A673 (cell line): ENCODE measurements at regions of chr19 and their contacts with region 1.

Region 1: DNA sequence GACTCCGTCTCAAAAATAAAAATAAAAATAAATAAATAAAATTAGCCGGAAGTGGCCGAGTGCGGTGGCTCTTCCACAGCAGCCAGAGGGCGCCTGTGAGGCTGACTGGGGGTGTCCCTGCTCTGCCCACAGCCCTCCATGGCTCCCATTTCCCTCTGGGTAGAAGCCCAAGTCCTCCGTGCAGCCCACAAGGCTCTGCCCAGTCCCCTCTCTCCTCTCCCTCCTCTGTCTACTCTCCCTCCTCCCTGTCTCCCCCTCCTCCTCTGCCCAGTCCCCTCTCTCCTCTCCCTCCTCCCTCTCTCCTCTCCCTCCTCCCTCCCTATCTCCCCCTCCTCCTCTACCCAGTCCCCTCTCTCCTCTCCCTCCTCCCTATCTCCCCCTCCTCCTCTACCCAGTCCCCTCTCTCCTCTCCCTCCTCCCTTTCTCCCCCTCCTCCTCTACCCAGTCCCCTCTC is 20.4 kb downstream of the MISP start:
- DNase-seq: peak; percentile 77
- H3K4me3 ChIP-seq: no peak overlapping the region
- H3K27ac ChIP-seq: no peak overlapping the region
- H3K4me1 ChIP-seq: no peaks in the 10 kb centered on the region
- H3K27me3 ChIP-seq: no peaks in the 10 kb centered on the region
- CTCF ChIP-seq: peak; percentile 51

Region 2: DNA sequence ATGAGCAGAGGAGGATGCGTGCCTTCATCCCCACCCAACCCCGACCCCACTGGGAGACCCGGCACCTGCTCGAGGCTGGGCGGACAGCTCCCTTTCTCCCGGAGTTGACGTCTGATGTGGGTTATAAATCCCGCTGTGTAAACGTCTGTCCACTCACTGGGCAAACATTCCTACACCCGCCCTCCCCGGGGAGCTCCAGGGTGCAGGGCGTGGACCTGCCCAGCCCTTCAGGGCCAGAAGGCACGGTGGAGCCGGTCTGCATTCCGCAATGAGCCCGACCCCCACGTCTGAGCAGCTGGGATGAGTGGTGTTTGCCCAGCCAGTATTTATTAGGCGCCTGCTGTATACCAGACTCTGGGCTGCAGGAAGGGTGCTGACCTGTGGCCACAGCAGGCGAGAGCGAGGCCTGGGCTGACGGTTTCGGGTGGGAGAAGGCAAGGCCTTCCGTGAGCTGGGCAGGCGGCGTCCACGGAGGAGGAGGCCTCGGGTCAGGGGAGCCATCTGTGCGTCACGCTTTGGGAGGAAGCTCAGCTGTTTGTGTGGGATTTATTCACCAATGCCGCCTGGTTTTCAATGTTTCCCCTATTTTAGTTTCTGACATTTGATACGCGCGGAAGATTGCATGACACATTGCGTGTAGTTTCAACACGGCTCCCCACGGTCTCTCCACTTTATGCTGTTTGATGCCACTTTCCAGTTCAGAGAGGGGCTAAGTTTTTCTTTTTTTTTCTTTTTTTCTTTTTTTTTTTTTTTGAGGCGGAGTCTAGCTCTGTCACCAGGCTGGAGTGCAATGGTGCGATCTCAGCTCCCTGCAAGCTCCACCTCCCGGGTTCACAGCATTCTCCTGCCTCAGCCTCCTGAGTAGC is 18.5 kb before region 1 on chr19:
- CTCF ChIA-PET with region 1: interaction called, 15 read pairs
- POLR2A ChIA-PET with region 1: no interaction called
- intact Hi-C with region 1: no loop called
- DNase-seq: peak; percentile 58
- H3K4me3 ChIP-seq: no peak overlapping the region
- H3K27ac ChIP-seq: no peak overlapping the region
- H3K4me1 ChIP-seq: no peaks in the 10 kb centered on the region
- H3K27me3 ChIP-seq: no peaks in the 10 kb centered on the region
- CTCF ChIP-seq: no peak

Region 3: DNA sequence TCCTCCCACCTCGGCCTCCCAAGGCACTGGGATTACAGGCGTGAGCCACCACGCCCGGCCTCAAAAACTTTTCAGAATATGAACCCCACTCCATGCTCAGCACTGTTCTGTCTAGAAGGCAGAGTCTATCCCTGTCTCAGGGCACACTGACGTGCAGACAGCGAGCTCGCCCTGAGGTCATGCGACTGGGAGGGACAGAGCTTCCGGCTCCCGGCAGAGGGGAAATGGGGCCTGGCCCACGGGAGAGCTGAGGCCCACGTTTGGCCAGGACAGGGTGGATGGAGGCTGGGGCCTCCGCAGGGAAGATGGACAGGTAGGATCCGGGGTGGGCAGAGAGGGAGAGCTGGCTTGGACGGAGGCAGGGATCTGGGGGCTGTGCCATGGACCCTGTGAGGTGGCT is 53.5 kb after region 1 on chr19:
- CTCF ChIA-PET with region 1: interaction called, 11 read pairs
- POLR2A ChIA-PET with region 1: no interaction called
- intact Hi-C with region 1: no loop called
- DNase-seq: no peak
- H3K4me3 ChIP-seq: no peak overlapping the region
- H3K27ac ChIP-seq: no peak overlapping the region
- H3K4me1 ChIP-seq: no peaks in the 10 kb centered on the region
- H3K27me3 ChIP-seq: no peaks in the 10 kb centered on the region
- CTCF ChIP-seq: no peak

Region 4: DNA sequence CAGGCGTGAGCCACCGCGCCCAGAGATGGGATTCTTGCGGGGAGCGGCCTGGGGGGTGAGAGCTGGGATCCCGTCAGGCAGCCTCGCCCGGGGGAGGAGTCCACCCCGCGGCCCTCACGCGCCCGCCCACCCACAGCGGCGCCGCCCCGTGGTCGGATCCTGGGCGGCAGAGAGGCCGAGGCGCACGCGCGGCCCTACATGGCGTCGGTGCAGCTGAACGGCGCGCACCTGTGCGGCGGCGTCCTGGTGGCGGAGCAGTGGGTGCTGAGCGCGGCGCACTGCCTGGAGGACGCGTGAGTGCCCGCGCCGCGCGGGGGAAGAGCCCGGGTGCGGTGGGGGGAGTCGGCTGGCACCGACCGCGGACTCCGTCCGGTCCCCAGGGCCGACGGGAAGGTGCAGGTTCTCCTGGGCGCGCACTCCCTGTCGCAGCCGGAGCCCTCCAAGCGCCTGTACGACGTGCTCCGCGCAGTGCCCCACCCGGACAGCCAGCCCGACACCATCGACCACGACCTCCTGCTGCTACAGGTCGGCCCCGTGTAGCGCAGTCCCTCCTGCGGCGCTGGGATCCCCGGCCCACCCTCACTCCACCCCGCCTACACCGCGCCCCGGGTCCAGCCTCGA is 89.2 kb after region 1 on chr19:
- CTCF ChIA-PET with region 1: interaction called, 3 read pairs
- POLR2A ChIA-PET with region 1: no interaction called
- intact Hi-C with region 1: loop called (anchors 5 kb)
- DNase-seq: peak; percentile 75
- H3K4me3 ChIP-seq: peak overlapping the region; percentile 51
- H3K27ac ChIP-seq: no peak overlapping the region
- H3K4me1 ChIP-seq: peaks cover 9% of the 10 kb centered on the region
- H3K27me3 ChIP-seq: no peaks in the 10 kb centered on the region
- CTCF ChIP-seq: 0 out of 2 replicates have a peak, but pooled peaks have one; percentile 17

Region 5: DNA sequence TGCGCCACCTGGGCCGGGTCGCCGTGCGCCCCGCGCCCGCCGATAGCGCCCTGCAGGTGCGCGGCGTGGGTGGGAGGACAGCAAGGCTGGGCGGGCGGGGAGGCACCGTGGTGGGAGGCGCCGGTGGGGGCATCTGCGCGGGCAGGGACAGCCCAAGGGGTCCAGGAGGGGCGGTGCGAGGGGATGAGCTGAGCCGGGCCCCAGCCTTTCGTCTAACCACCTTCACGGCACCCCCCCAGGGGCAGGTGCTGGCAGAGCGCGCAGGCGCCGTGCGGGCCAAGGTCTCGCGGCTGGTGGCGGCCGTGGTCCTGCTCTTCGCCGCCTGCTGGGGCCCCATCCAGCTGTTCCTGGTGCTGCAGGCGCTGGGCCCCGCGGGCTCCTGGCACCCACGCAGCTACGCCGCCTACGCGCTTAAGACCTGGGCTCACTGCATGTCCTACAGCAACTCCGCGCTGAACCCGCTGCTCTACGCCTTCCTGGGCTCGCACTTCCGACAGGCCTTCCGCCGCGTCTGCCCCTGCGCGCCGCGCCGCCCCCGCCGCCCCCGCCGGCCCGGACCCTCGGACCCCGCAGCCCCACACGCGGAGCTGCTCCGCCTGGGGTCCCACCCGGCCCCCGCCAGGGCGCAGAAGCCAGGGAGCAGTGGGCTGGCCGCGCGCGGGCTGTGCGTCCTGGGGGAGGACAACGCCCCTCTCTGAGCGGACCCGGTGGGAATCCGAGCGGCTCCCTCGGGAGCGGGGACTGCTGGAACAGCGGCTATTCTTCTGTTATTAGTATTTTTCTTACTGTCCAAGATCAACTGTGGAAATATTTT is 148.9 kb after region 1 on chr19:
- CTCF ChIA-PET with region 1: no interaction called
- POLR2A ChIA-PET with region 1: no interaction called
- intact Hi-C with region 1: loop called (anchors 2 kb)
- DNase-seq: peak; percentile 65
- H3K4me3 ChIP-seq: peak overlapping the region; percentile 43
- H3K27ac ChIP-seq: no peak overlapping the region
- H3K4me1 ChIP-seq: peaks cover 30% of the 10 kb centered on the region
- H3K27me3 ChIP-seq: peaks cover 37% of the 10 kb centered on the region
- CTCF ChIP-seq: no peak

Region 6: DNA sequence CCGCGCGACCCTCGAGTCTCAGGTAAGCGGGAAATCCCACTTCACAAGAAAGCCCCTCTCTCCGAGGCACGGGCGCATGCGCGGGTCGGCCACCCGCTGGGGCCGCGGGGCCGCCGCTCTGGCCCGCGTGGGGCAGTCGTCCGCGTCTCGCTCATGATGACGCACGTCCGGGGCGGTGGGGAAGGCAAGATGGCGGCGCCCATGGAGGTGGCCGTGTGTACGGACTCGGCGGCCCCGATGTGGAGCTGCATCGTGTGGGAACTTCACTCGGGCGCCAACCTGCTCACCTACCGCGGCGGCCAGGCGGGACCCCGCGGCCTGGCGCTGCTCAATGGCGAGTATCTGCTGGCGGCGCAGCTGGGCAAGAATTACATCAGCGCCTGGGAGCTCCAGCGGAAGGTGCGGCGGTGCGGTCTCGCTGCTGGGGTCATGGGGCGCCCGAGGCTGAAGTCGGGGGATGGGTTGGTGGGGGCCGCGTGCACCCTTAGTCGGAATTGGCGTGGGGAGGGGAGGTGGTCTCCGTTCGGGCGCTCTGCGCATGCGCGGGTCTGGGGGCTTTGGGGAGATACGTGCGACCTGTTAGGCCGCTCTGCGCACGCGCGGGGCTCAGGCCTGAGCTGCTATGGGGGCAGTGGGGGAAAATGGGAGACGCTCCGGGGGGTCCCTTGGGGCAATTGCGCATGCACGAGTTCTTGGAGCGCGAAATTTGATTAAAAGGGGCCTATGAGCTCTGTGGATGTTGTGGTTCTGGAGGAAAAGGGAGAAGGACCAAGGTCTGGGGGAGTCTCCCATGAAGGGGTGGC is 213.0 kb after region 1 on chr19 and contains the start of gene WDR18:
- CTCF ChIA-PET with region 1: interaction called, 4 read pairs
- POLR2A ChIA-PET with region 1: no interaction called
- intact Hi-C with region 1: loop called (anchors 5 kb)
- DNase-seq: peak; percentile 96
- H3K4me3 ChIP-seq: peak within 1 kb of the TSS; percentile 80
- H3K27ac ChIP-seq: peak within 1 kb of the TSS; percentile 98
- H3K4me1 ChIP-seq: peaks cover 13% of the 10 kb centered on the region
- H3K27me3 ChIP-seq: no peaks in the 10 kb centered on the region
- CTCF ChIP-seq: no peak
- total RNA-seq, gene WDR18: 109 and 116 TPM in 2 replicates